ENCODE measurements at regions of chr18 and their contacts with region 1.

Region 1: GRCh38 chr18:36067055-36067957 is at the start of gene RPRD1A:
- DNase-seq: peak; percentile 90 to 98 (median 94)
- ATAC-seq: peak; percentile 96
- H3K4me3 ChIP-seq: peak within 1 kb of the TSS; percentile 88
- H3K4me3 Mint-ChIP-seq: peak within 1 kb of the TSS; percentile 92 to 98 (median 96)
- H3K27ac ChIP-seq: peak within 1 kb of the TSS; percentile 79
- H3K27ac Mint-ChIP-seq: peak within 1 kb of the TSS; percentile 85 to 97 (median 94)
- H3K4me1 ChIP-seq: peaks cover 11 to 16% of the 10 kb centered on the region in 2 donors
- H3K4me1 Mint-ChIP-seq: peaks cover 26 to 50% (median 44%) of the 10 kb centered on the region in 7 donors
- H3K27me3 ChIP-seq: no peaks in the 10 kb centered on the region
- H3K27me3 Mint-ChIP-seq: peaks cover 0 to 5% (median 0%) of the 10 kb centered on the region in 5 donors
- total RNA-seq, gene RPRD1A: 22.6 to 51.3 (median 28.7) TPM

Region 2: DNA sequence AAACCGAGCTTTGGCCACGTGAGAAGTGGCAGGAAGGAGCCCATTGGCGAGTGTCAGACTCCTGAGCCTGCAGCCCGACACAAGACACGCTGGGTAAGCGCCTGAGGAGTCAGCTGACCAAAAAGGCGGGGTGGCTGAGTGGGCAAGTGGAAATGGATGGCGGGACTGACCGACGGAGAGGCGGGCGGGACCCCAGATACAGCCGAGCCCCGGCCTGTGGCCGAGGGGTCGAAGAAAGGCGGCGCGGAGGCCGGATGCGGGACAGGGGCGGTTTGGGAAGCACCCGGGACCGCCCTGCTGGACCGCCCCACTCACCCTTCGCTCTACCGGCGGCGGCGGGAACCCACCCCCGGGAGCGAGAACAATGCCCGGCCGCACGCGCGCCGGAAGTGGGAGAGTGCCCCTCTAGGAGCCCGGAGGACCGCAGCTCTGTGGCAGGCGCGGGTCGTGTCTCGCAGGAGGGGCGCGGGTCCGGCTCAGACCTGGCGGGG is 800.1 kb before region 1 on chr18:
- CTCF ChIA-PET with region 1: no interaction called
- POLR2A ChIA-PET with region 1: no interaction called
- intact Hi-C with region 1: loop called in 1 of 2 experiments (anchors 10 kb)
- DNase-seq: peak; percentile 37 to 62 (median 54)
- ATAC-seq: peak; percentile 90
- H3K4me3 ChIP-seq: peak overlapping the region; percentile 78
- H3K4me3 Mint-ChIP-seq: peak overlapping the region; percentile 85 to 99 (median 97)
- H3K27ac ChIP-seq: peak overlapping the region; percentile 74
- H3K27ac Mint-ChIP-seq: peak overlapping the region; percentile 83 to 98 (median 97)
- H3K4me1 ChIP-seq: peaks cover 0 to 7% of the 10 kb centered on the region in 2 donors
- H3K4me1 Mint-ChIP-seq: peaks cover 13 to 35% (median 26%) of the 10 kb centered on the region in 7 donors
- H3K27me3 ChIP-seq: no peaks in the 10 kb centered on the region
- H3K27me3 Mint-ChIP-seq: no peaks in the 10 kb centered on the region

Region 3: DNA sequence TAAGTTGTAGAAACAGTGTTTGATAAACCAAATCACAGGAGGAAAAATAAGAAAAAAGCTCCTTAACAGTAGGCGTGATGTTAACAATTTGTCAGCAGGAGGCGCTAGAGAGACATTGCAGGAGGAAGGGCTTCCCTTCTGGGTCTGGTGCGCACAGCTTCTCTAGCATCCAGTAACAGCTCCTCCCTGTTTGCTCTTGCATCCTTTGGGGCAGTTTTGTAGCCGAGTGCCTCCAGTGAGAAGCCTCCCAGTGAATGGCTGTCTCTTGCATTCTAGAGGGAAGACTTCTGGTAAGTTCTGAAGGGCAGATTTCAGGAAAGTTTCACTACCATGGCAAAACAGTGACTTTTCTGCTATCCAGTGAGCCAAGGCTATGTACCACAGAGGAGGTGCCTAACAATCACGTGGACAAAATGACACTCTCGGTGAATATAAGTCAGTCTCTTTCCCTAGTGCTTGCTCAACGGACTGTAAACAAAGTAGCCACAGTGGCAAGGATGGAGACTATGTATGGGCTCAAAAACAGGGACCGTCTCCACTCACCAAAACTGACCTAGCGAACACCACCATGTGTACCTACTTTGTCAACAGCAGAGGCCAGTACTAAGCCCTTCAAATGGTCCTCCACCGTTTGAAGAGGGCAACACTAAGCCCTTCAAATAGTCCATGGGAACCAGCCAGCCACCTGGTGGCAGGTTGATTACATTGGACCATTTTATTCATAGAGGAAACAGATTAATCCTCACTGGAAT is 680.5 kb before region 1 on chr18:
- CTCF ChIA-PET with region 1: no interaction called
- POLR2A ChIA-PET with region 1: no interaction called
- intact Hi-C with region 1: no loop called
- DNase-seq: peak in 8 of 9 donors; percentile 45 to 78 (median 72)
- ATAC-seq: peak; percentile 95
- H3K4me3 ChIP-seq: no peak overlapping the region
- H3K4me3 Mint-ChIP-seq: peak overlapping the region in 1 of 10 donors; percentile 26
- H3K27ac ChIP-seq: no peak overlapping the region
- H3K27ac Mint-ChIP-seq: peak overlapping the region in 1 of 9 donors; percentile 48
- H3K4me1 ChIP-seq: no peaks in the 10 kb centered on the region
- H3K4me1 Mint-ChIP-seq: peaks cover 0 to 11% (median 5%) of the 10 kb centered on the region in 7 donors
- H3K27me3 ChIP-seq: no peaks in the 10 kb centered on the region
- H3K27me3 Mint-ChIP-seq: peaks cover 13 to 41% (median 28%) of the 10 kb centered on the region in 5 donors

Region 4: DNA sequence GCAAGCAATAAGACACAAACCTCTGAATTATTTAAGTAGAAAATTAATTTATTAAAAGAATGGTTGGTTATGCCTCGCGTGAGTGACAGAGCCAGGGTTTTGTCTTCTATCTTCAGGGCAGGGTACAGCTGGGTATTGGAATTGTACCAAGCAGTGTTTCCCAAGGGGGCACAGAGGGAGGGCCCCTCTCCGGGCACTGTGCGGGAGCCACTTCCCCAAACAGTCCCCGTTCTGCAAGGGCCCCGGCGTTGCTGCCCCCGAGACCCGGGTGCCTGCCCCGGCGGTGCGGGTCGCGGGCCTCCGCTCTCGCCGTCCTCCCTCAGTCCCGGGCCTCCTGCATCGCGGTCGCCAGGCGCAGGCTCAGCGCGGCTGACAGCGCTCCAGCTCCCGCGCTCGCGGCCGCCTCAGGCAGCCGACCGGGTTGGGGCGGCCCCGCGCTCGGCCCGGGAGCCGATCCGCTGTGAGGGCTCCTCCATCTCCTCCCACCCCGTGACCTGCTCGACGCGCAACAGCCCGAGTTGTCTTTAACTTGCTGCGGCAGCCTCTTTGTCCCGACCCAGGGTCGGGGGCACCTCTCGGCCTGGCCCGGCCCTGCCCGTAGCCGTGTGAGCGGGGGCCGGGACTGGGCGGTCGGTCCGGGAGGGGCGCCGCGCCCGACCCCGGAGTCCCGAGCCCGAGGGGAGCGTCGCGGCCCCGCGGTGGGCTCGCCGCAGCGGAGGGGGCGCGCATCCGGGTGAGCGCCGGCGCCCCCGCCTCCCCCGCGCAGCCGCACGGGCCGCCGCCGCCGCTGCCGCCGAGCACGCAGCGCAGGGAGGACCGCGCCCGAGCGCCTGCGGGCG is 486.4 kb before region 1 on chr18:
- CTCF ChIA-PET with region 1: no interaction called
- POLR2A ChIA-PET with region 1: no interaction called
- intact Hi-C with region 1: loop called in 1 of 2 experiments (anchors 5 kb)
- DNase-seq: peak; percentile 54 to 70 (median 63)
- ATAC-seq: peak; percentile 84
- H3K4me3 ChIP-seq: peak overlapping the region; percentile 61
- H3K4me3 Mint-ChIP-seq: peak overlapping the region; percentile 60 to 80 (median 72)
- H3K27ac ChIP-seq: peak overlapping the region; percentile 77
- H3K27ac Mint-ChIP-seq: peak overlapping the region in 5 of 9 donors; percentile 37 to 80 (median 63)
- H3K4me1 ChIP-seq: peaks cover 11% of the 10 kb centered on the region in 2 donors
- H3K4me1 Mint-ChIP-seq: peaks cover 13 to 39% (median 28%) of the 10 kb centered on the region in 7 donors
- H3K27me3 ChIP-seq: no peaks in the 10 kb centered on the region
- H3K27me3 Mint-ChIP-seq: peaks cover 0 to 18% (median 7%) of the 10 kb centered on the region in 5 donors

Region 5: GRCh38 chr18:35939138-35939537 is 128.2 kb before region 1 on chr18:
- CTCF ChIA-PET with region 1: no interaction called
- POLR2A ChIA-PET with region 1: no interaction called
- intact Hi-C with region 1: no loop called
- DNase-seq: no peak
- ATAC-seq: no peak
- H3K4me3 ChIP-seq: no peak overlapping the region
- H3K4me3 Mint-ChIP-seq: no peak overlapping the region
- H3K27ac ChIP-seq: no peak overlapping the region
- H3K27ac Mint-ChIP-seq: no peak overlapping the region
- H3K4me1 ChIP-seq: no peaks in the 10 kb centered on the region
- H3K4me1 Mint-ChIP-seq: peaks cover 0 to 3% (median 0%) of the 10 kb centered on the region in 7 donors
- H3K27me3 ChIP-seq: no peaks in the 10 kb centered on the region
- H3K27me3 Mint-ChIP-seq: peaks cover 0 to 21% (median 3%) of the 10 kb centered on the region in 5 donors

Region 6: DNA sequence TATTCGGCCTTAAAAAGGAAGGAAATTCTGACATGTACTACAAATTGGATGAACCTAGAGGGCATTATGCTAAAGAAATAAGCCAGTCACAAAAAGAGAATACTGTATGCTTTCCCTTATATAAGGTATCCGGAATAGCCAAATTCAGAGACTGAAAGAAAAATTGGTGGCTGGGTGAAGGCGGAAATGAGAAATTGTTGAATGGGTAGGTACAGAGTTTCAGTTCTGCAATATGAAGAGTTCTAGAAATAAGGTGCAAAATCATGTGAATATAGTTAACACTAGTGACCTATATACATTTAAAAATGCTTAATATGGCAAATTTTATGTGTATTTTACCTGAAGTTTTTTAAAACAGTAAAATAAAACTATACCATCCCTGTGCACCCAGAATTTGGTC is 51.7 kb before region 1 on chr18:
- CTCF ChIA-PET with region 1: interaction called, 6 read pairs
- POLR2A ChIA-PET with region 1: no interaction called
- intact Hi-C with region 1: loop called (anchors 5 kb)
- DNase-seq: no peak
- ATAC-seq: no peak
- H3K4me3 ChIP-seq: no peak overlapping the region
- H3K4me3 Mint-ChIP-seq: no peak overlapping the region
- H3K27ac ChIP-seq: no peak overlapping the region
- H3K27ac Mint-ChIP-seq: no peak overlapping the region
- H3K4me1 ChIP-seq: no peaks in the 10 kb centered on the region
- H3K4me1 Mint-ChIP-seq: peaks cover 0 to 17% (median 5%) of the 10 kb centered on the region in 7 donors
- H3K27me3 ChIP-seq: no peaks in the 10 kb centered on the region
- H3K27me3 Mint-ChIP-seq: no peaks in the 10 kb centered on the region

Region 7: DNA sequence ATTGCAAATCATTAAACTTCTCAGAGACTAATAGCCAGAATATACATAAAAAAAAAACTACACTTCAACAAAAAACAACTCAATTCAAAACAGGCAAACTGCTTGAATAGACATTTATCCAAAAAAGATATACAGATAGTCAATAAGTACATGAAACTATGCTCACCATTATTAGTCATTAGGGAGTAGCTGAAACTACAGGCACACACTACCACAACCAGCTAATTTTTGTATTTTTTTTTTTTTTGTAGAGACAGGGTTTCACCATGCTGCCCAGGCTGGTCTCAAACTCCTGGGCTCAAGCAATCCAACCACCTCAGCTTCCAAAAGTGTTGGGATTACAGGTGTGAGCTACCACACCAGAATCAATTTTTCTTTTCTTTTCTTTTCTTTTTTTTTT is 16.8 kb before region 1 on chr18:
- CTCF ChIA-PET with region 1: no interaction called
- POLR2A ChIA-PET with region 1: no interaction called
- intact Hi-C with region 1: loop called in 1 of 2 experiments (anchors 2 kb)
- DNase-seq: no peak
- ATAC-seq: no peak
- H3K4me3 ChIP-seq: no peak overlapping the region
- H3K4me3 Mint-ChIP-seq: peak overlapping the region in 1 of 10 donors; percentile 18
- H3K27ac ChIP-seq: no peak overlapping the region
- H3K27ac Mint-ChIP-seq: no peak overlapping the region
- H3K4me1 ChIP-seq: peaks cover 0 to 3% of the 10 kb centered on the region in 2 donors
- H3K4me1 Mint-ChIP-seq: peaks cover 2 to 76% (median 63%) of the 10 kb centered on the region in 7 donors
- H3K27me3 ChIP-seq: no peaks in the 10 kb centered on the region
- H3K27me3 Mint-ChIP-seq: no peaks in the 10 kb centered on the region

Region 8: DNA sequence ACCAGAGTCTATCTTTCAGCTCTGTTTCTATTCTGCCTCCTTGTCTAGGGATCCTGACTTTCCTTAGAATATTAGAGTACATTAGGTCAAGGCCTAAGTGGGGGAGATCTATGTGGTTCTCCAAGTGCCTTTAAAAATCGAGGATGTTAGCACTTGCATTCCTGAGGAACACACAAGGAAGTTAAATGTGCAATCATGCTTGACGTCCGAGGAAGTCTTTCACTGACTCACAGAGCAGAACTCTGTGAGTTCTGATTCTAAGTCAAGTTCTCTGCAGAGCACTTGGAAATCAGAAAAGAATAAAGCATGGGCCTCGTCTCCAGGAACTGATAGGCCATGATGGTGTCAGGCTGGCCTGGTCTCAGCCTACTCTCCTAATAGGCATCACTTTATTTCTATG is 247.4 kb after region 1 on chr18:
- CTCF ChIA-PET with region 1: no interaction called
- POLR2A ChIA-PET with region 1: no interaction called
- intact Hi-C with region 1: no loop called
- DNase-seq: no peak
- ATAC-seq: no peak
- H3K4me3 ChIP-seq: no peak overlapping the region
- H3K4me3 Mint-ChIP-seq: no peak overlapping the region
- H3K27ac ChIP-seq: no peak overlapping the region
- H3K27ac Mint-ChIP-seq: no peak overlapping the region
- H3K4me1 ChIP-seq: no peaks in the 10 kb centered on the region
- H3K4me1 Mint-ChIP-seq: no peaks in the 10 kb centered on the region
- H3K27me3 ChIP-seq: no peaks in the 10 kb centered on the region
- H3K27me3 Mint-ChIP-seq: peaks cover 14 to 31% (median 24%) of the 10 kb centered on the region in 5 donors

Region 9: DNA sequence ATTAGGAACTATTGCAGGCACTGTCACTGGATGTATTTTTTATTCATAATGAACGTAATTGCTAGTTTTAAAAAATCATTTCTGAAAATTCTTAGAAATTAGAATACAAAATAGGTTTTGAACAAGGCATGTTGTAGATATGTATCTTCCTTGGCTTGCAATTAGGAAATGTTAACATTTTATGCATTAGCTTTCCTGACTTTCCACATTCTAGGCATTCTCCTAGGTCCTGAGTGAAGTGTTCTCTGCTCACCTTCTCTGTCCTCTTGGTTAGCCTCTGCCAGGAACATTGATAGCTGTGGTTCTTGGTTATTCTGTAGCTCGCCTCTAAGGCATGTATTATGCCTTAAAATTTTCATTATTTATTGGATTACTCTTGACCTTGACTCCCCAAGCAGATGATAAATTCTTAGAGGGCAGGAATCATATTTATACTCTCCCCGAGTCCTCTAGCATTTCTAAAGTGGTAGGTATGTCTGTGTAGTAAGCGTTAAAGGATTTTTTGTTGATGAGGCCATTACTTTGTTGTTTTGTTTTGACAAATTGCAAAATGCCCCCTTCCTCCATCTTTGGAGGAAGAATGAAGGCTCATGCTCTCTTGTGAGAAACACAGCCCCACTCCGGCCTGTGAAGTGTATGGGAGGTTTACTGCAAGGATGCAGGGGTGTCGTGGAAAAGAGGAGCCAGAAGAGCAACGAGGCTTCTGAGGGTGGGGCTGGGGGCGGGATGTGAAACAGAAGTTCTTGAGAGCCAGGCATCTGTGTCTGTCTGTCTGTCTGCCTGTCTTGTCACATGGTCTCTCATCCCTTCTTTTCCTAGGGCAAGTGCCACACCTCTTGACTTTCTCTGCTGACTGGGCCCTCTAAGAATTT is 360.8 kb after region 1 on chr18:
- CTCF ChIA-PET with region 1: no interaction called
- POLR2A ChIA-PET with region 1: no interaction called
- intact Hi-C with region 1: no loop called
- DNase-seq: no peak
- ATAC-seq: no peak
- H3K4me3 ChIP-seq: no peak overlapping the region
- H3K4me3 Mint-ChIP-seq: no peak overlapping the region
- H3K27ac ChIP-seq: no peak overlapping the region
- H3K27ac Mint-ChIP-seq: no peak overlapping the region
- H3K4me1 ChIP-seq: no peaks in the 10 kb centered on the region
- H3K4me1 Mint-ChIP-seq: no peaks in the 10 kb centered on the region
- H3K27me3 ChIP-seq: no peaks in the 10 kb centered on the region
- H3K27me3 Mint-ChIP-seq: peaks cover 2 to 28% (median 12%) of the 10 kb centered on the region in 5 donors